Heart left ventricle (tissue), 16 donors: ENCODE measurements at regions of chr1 and their contacts with region 1.

Region 1: GRCh38 chr1:154225370-154225769 is 4.6 kb downstream of the UBAP2L start:
- DNase-seq: no peak
- ATAC-seq: no peak
- H3K4me3 ChIP-seq: no peak overlapping the region
- H3K27ac ChIP-seq: no peak overlapping the region
- H3K4me1 ChIP-seq: peaks cover 4 to 38% (median 29%) of the 10 kb centered on the region in 12 donors
- H3K27me3 ChIP-seq: no peaks in the 10 kb centered on the region
- CTCF ChIP-seq: no peak
- POLR2A ChIP-seq: no peak

Region 2: GRCh38 chr1:154263465-154264332 is 38.3 kb after region 1 on chr1:
- intact Hi-C with region 1: loop called in 2 of 10 experiments (anchors 5 kb)
- DNase-seq: no peak
- ATAC-seq: no peak
- H3K4me3 ChIP-seq: no peak overlapping the region
- H3K27ac ChIP-seq: peak overlapping the region in 3 of 12 donors; percentile 7 to 28 (median 27)
- H3K4me1 ChIP-seq: peaks cover 0 to 14% (median 0%) of the 10 kb centered on the region in 12 donors
- H3K27me3 ChIP-seq: no peaks in the 10 kb centered on the region
- CTCF ChIP-seq: no peak
- POLR2A ChIP-seq: no peak

Region 3: DNA sequence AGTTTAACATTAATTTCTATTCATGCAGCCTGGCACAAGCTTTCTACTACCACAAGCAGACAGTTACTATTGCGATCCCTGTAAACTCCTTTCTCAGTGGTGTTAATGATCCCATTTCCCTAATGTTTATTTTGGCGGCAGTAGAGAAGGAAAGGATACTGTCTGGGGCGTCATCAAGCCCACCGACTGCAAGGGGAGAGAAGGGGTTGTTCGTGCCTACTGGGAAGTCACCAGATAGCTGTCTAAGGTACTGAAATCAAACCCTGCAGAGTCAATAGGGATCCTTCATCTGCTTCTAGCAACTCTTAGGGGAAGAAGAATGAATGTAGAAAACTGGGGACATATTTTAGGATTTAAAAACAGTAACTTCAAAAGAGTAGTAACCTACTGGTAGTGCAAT is 477.8 kb after region 1 on chr1:
- intact Hi-C with region 1: no loop called
- DNase-seq: no peak
- ATAC-seq: no peak
- H3K4me3 ChIP-seq: no peak overlapping the region
- H3K27ac ChIP-seq: no peak overlapping the region
- H3K4me1 ChIP-seq: peaks cover 0 to 27% (median 4%) of the 10 kb centered on the region in 12 donors
- H3K27me3 ChIP-seq: no peaks in the 10 kb centered on the region
- CTCF ChIP-seq: no peak
- POLR2A ChIP-seq: no peak